T-cell (primary cell): ENCODE measurements at regions of chr19 and their contacts with region 1.

Region 1: GRCh38 chr19:16185123-16185767 is at the start of gene FAM32A:
- DNase-seq: peak; percentile 96 to 100 (median 98)
- ATAC-seq: peak; percentile 90 to 95 (median 92)
- H3K4me3 ChIP-seq: peak within 1 kb of the TSS; percentile 86 to 99
- H3K4me3 Mint-ChIP-seq: peak within 1 kb of the TSS; percentile 99 to 100 (median 100)
- H3K27ac ChIP-seq: peak within 1 kb of the TSS; percentile 47
- H3K27ac Mint-ChIP-seq: peak within 1 kb of the TSS; percentile 97 to 98
- H3K4me1 ChIP-seq: peaks cover 10 to 43% of the 10 kb centered on the region in 2 experiments
- H3K4me1 Mint-ChIP-seq: peaks cover 37 to 43% (median 41%) of the 10 kb centered on the region in 3 donors
- H3K27me3 ChIP-seq: peaks cover 0 to 6% of the 10 kb centered on the region in 2 experiments
- H3K27me3 Mint-ChIP-seq: peaks cover 0 to 1% of the 10 kb centered on the region in 2 donors
- total RNA-seq, gene FAM32A: 42.1 to 60.6 (median 53.3) TPM

Region 2: DNA sequence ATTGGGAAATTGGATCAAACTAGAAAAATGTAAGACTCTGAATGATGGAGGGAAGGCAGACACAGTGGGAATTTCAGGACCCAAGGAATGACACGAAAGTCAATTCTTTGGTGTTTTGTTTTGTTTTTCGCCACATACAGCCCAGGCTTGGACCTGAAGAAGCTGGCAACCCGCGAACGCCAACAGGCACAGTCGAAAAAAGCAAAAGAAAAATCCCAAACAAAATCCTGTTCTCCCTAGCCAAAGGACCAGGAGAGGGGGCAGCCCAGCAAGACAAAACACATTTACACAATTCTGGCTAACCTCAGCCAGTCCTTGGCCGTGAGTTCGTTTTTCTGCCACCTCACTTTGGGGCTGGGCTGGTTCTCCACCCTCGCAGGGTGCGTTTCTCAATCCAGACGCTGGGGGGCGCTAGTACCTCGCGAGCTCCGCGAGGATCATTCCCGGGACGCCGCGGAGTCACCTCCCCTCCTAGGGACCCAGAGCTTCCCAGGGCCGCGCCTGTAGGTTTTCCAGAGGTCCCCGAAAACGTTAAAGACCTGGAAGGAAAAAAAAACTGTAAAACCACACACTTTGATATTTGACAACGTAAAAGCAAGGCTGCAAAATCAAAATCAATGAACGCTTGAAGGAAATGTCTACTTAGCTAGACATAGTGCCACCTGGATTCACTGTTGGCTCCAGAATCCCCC is 143.8 kb before region 1 on chr19:
- CTCF ChIA-PET with region 1: interaction called, 3 to 15 read pairs
- POLR2A ChIA-PET with region 1: no interaction called
- DNase-seq: peak in 34 of 35 experiments; percentile 30 to 82 (median 64)
- ATAC-seq: peak; percentile 75 to 87 (median 82)
- H3K4me3 ChIP-seq: peak overlapping the region in 1 of 2 donors; percentile 29
- H3K4me3 Mint-ChIP-seq: peak overlapping the region in 2 of 3 donors; percentile 17 to 44
- H3K27ac ChIP-seq: no peak overlapping the region
- H3K27ac Mint-ChIP-seq: no peak overlapping the region
- H3K4me1 ChIP-seq: peaks cover 0 to 8% of the 10 kb centered on the region in 2 experiments
- H3K4me1 Mint-ChIP-seq: peaks cover 0 to 17% (median 13%) of the 10 kb centered on the region in 3 donors
- H3K27me3 ChIP-seq: peaks cover 0 to 16% of the 10 kb centered on the region in 2 experiments
- H3K27me3 Mint-ChIP-seq: no peaks in the 10 kb centered on the region

Region 3: DNA sequence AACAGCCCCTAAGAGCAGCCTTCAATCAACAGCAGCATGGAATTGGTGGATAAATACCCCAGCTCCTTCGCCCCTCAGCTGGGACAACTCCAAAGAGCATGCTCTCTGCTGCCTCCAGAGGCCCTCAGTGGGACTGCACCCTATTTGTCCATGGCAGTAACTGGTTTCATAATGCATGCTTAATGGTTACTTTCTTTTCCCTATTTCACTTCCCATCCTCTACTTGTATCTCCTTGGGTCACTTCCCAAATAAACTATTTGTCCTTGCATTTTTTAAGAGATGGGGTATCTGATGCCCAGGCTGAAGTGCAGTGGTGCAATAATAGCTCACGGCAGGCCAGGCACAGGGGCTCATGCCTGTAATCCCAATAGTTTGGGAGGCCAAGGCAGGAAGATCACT is 122.5 kb before region 1 on chr19:
- CTCF ChIA-PET with region 1: interaction called, 3 to 15 read pairs
- POLR2A ChIA-PET with region 1: no interaction called
- DNase-seq: peak in 33 of 35 experiments; percentile 24 to 83 (median 62)
- ATAC-seq: peak; percentile 41 to 74 (median 49)
- H3K4me3 ChIP-seq: no peak overlapping the region
- H3K4me3 Mint-ChIP-seq: no peak overlapping the region
- H3K27ac ChIP-seq: no peak overlapping the region
- H3K27ac Mint-ChIP-seq: no peak overlapping the region
- H3K4me1 ChIP-seq: peaks cover 0 to 23% of the 10 kb centered on the region in 2 experiments
- H3K4me1 Mint-ChIP-seq: peaks cover 16 to 32% (median 18%) of the 10 kb centered on the region in 3 donors
- H3K27me3 ChIP-seq: peaks cover 0 to 9% of the 10 kb centered on the region in 2 experiments
- H3K27me3 Mint-ChIP-seq: peaks cover 3% of the 10 kb centered on the region in 2 donors

Region 4: GRCh38 chr19:16078772-16079645 is 106.2 kb before region 1 on chr19:
- CTCF ChIA-PET with region 1: interaction called in 1 of 2 experiments, 11 read pairs
- POLR2A ChIA-PET with region 1: no interaction called
- DNase-seq: peak; percentile 27 to 91 (median 69)
- ATAC-seq: peak; percentile 77 to 81 (median 78)
- H3K4me3 ChIP-seq: peak overlapping the region; percentile 41 to 74
- H3K4me3 Mint-ChIP-seq: peak overlapping the region; percentile 75 to 95 (median 81)
- H3K27ac ChIP-seq: peak overlapping the region; percentile 78
- H3K27ac Mint-ChIP-seq: peak overlapping the region; percentile 95 to 99
- H3K4me1 ChIP-seq: peaks cover 29 to 78% of the 10 kb centered on the region in 2 experiments
- H3K4me1 Mint-ChIP-seq: peaks cover 67 to 81% (median 75%) of the 10 kb centered on the region in 3 donors
- H3K27me3 ChIP-seq: no peaks in the 10 kb centered on the region
- H3K27me3 Mint-ChIP-seq: no peaks in the 10 kb centered on the region

Region 5: DNA sequence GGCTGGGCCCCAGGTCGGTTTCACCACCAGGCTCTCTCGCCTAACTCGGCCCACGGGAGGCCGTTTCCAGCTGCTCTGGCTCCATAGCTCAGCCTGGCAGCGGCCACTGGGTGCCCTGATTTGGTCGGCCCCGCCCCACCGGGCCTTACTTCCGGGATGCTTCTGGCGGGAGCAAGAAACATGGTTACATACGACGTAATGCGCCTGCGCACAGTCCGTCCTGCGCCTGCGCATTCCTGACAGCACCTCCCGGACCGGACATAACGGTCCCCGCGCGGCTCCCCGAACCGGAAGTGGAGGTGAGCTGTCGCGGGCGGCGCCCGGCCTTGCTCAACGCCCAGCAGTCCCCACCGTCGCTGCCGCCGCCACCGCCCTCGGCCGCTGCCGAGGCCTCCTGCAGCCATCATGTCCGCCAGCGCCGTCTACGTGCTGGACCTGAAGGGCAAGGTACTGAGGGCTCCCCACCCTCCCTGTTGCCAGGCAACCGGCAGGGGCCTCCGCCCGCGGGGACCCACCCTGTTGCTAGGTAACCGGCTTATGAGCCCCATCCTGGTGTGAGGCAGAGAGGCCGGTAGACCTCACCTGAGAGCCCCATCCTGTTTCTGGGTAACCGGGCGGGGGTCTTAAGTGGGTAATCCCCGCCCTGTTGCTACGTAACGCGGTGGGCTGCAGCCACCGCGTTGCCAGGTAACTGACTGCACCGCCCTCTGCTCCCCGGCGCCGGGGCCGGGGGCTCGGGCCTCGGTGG is 12.6 kb after region 1 on chr19 and contains the start of gene AP1M1:
- CTCF ChIA-PET with region 1: interaction called in 1 of 2 experiments, 23 read pairs
- POLR2A ChIA-PET with region 1: interaction called, 6 to 8 read pairs
- DNase-seq: peak; percentile 94 to 100 (median 97)
- ATAC-seq: peak; percentile 85 to 91 (median 89)
- H3K4me3 ChIP-seq: peak within 1 kb of the TSS; percentile 93 to 98
- H3K4me3 Mint-ChIP-seq: peak within 1 kb of the TSS; percentile 71 to 86 (median 81)
- H3K27ac ChIP-seq: peak within 1 kb of the TSS; percentile 74
- H3K27ac Mint-ChIP-seq: peak within 1 kb of the TSS; percentile 95 to 98
- H3K4me1 ChIP-seq: peaks cover 19 to 45% of the 10 kb centered on the region in 2 experiments
- H3K4me1 Mint-ChIP-seq: peaks cover 44 to 47% (median 46%) of the 10 kb centered on the region in 3 donors
- H3K27me3 ChIP-seq: no peaks in the 10 kb centered on the region
- H3K27me3 Mint-ChIP-seq: no peaks in the 10 kb centered on the region
- total RNA-seq, gene AP1M1: 94.9 to 171 (median 133) TPM

Region 6: GRCh38 chr19:18160971-18161635 is 1975.9 kb after region 1 on chr19:
- CTCF ChIA-PET with region 1: no interaction called
- POLR2A ChIA-PET with region 1: no interaction called
- DNase-seq: peak; percentile 37 to 90 (median 68)
- ATAC-seq: peak; percentile 93 to 98 (median 94)
- H3K4me3 ChIP-seq: peak overlapping the region in 1 of 2 donors; percentile 32
- H3K4me3 Mint-ChIP-seq: peak overlapping the region; percentile 28 to 52 (median 34)
- H3K27ac ChIP-seq: no peak overlapping the region
- H3K27ac Mint-ChIP-seq: peak overlapping the region in 1 of 2 donors; percentile 39
- H3K4me1 ChIP-seq: peaks cover 3 to 15% of the 10 kb centered on the region in 2 experiments
- H3K4me1 Mint-ChIP-seq: peaks cover 11 to 17% (median 15%) of the 10 kb centered on the region in 3 donors
- H3K27me3 ChIP-seq: no peaks in the 10 kb centered on the region
- H3K27me3 Mint-ChIP-seq: no peaks in the 10 kb centered on the region